Heart right ventricle (tissue), 16 donors: ENCODE measurements at regions of chr5 and their contacts with region 1.

Region 1: GRCh38 chr5:94976853-94977252 is 308.0 kb downstream of the MCTP1 start:
- DNase-seq: no peak
- ATAC-seq: no peak
- H3K4me3 ChIP-seq: no peak overlapping the region
- H3K27ac ChIP-seq: no peak overlapping the region
- H3K4me1 ChIP-seq: no peaks in the 10 kb centered on the region
- H3K27me3 ChIP-seq: no peaks in the 10 kb centered on the region
- CTCF ChIP-seq: no peak

Region 2: GRCh38 chr5:94998670-94999069 is 21.8 kb after region 1 on chr5:
- intact Hi-C with region 1: no loop called
- DNase-seq: no peak
- ATAC-seq: no peak
- H3K4me3 ChIP-seq: no peak overlapping the region
- H3K27ac ChIP-seq: no peak overlapping the region
- H3K4me1 ChIP-seq: no peaks in the 10 kb centered on the region
- H3K27me3 ChIP-seq: no peaks in the 10 kb centered on the region
- CTCF ChIP-seq: no peak

Region 3: DNA sequence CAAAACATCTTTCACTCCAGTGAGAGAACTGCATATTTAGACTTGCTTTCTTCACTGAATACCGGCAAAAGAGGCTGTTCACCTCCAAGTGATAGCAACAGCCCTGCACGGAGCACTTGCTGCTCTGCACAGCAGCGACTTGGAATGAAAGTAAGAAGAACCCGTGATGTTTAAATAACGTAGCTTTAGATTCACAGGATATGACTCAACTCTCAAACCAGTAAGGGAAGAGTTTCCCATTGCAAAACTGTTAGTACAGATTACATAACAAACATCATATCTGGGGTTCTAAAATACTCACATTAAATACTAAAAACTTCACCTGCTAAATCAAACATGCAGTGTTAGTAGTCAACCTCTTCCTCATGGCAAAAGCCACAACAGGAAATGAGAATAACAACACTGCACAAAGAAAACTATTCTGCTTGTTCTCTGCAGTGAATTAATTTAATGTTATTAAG is 104.7 kb after region 1 on chr5:
- intact Hi-C with region 1: loop called in 1 of 10 experiments (anchors 10 kb)
- DNase-seq: peak; percentile 25 to 29
- ATAC-seq: peak in 7 of 8 donors; percentile 55 to 91 (median 86)
- H3K4me3 ChIP-seq: peak overlapping the region in 9 of 10 donors; percentile 21 to 63 (median 50)
- H3K27ac ChIP-seq: peak overlapping the region in 9 of 10 donors; percentile 10 to 85 (median 46)
- H3K4me1 ChIP-seq: peaks cover 0 to 34% (median 0%) of the 10 kb centered on the region in 9 donors
- H3K27me3 ChIP-seq: no peaks in the 10 kb centered on the region
- CTCF ChIP-seq: no peak

Region 4: GRCh38 chr5:95098012-95098411 is 121.2 kb after region 1 on chr5:
- intact Hi-C with region 1: no loop called
- DNase-seq: no peak
- ATAC-seq: no peak
- H3K4me3 ChIP-seq: no peak overlapping the region
- H3K27ac ChIP-seq: no peak overlapping the region
- H3K4me1 ChIP-seq: no peaks in the 10 kb centered on the region
- H3K27me3 ChIP-seq: no peaks in the 10 kb centered on the region
- CTCF ChIP-seq: no peak

Region 5: DNA sequence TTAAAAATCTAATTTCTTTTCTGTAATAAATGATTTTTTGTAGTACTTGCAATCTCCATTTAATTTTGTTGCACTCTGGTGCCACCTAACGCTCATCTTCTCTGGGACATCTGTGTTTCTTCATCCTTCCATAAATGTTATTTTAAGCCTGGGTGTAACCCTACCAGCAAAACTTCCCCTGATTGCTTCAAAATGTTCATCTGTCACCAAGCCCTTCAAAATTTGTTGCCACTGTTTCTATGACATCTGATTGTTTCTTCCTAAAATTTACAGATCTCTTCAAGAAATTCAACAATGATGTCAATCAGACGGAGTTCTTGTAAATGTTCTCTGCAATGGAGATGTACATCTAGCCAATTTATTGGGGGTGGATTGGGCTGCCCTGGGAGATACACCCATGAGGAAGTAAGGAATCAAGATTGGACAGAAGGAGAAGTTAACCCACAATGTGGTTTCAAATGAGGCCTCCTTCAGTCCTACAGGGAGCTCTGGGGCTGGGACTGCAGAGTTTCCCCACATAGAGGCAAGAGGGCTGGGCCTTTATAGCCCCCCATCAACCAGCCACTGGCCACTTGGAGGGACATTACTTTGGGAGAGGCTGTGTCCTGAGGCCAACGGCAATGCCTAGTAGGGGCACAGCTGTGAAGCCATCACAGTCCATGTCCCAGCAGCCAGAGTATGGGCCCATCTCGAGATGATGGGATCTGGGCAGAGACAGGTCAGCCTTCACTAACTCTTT is 284.8 kb after region 1 on chr5:
- intact Hi-C with region 1: loop called in 1 of 10 experiments (anchors 10 kb)
- DNase-seq: no peak
- ATAC-seq: peak in 4 of 8 donors; percentile 43 to 58 (median 54)
- H3K4me3 ChIP-seq: no peak overlapping the region
- H3K27ac ChIP-seq: no peak overlapping the region
- H3K4me1 ChIP-seq: no peaks in the 10 kb centered on the region
- H3K27me3 ChIP-seq: no peaks in the 10 kb centered on the region
- CTCF ChIP-seq: peak in 7 of 9 donors; percentile 26 to 59 (median 43)